Activated naive CD4-positive, alpha-beta T cell treated with anti-CD3 and anti-CD28 coated beads for 36 hours (primary cell): ENCODE measurements at regions of chr3 and their contacts with region 1.

Region 1: GRCh38 chr3:169744366-169745054 is 20.4 kb downstream of the TERC start:
- DNase-seq: no peak
- H3K4me3 Mint-ChIP-seq: no peak overlapping the region
- H3K27ac Mint-ChIP-seq: no peak overlapping the region
- H3K4me1 Mint-ChIP-seq: peaks cover 14% of the 10 kb centered on the region
- H3K27me3 Mint-ChIP-seq: peaks cover 16% of the 10 kb centered on the region

Region 2: DNA sequence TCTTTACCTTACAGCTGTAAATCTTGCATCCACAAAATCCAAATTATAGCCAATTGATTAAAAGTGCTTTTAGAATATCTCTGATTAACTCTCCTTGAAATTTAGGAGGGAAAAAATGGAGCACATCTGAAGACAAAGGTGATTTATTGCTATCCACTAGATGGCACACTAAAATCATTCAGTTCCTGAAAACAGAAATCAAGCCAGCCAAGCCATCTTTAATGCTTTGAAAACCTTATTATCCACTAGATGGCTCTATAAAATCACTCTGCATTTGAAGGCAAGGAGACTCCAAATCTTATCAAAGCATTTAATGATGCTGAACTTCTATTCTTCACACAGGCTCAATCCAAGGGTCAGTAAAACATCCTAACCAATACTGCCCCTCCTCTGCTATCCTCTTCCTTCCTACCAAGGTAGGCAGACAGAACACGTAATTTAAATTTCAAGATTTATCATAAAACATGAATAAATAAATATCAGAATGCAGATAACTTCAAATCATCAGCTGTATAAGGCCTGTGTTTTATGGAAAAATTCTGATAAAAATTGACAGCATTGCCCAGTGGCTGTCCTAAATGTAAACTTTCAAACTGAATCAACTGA is 1697.2 kb before region 1 on chr3:
- CTCF ChIA-PET with region 1: no interaction called
- intact Hi-C with region 1: loop called (anchors 5 kb)
- DNase-seq: no peak
- H3K4me3 Mint-ChIP-seq: no peak overlapping the region
- H3K27ac Mint-ChIP-seq: no peak overlapping the region
- H3K4me1 Mint-ChIP-seq: no peaks in the 10 kb centered on the region
- H3K27me3 Mint-ChIP-seq: peaks cover 9% of the 10 kb centered on the region

Region 3: GRCh38 chr3:168865022-168865551 is 879.4 kb before region 1 on chr3:
- CTCF ChIA-PET with region 1: interaction called, 5 read pairs
- intact Hi-C with region 1: loop called (anchors 1 kb)
- DNase-seq: no peak
- H3K4me3 Mint-ChIP-seq: no peak overlapping the region
- H3K27ac Mint-ChIP-seq: no peak overlapping the region
- H3K4me1 Mint-ChIP-seq: no peaks in the 10 kb centered on the region
- H3K27me3 Mint-ChIP-seq: no peaks in the 10 kb centered on the region

Region 4: DNA sequence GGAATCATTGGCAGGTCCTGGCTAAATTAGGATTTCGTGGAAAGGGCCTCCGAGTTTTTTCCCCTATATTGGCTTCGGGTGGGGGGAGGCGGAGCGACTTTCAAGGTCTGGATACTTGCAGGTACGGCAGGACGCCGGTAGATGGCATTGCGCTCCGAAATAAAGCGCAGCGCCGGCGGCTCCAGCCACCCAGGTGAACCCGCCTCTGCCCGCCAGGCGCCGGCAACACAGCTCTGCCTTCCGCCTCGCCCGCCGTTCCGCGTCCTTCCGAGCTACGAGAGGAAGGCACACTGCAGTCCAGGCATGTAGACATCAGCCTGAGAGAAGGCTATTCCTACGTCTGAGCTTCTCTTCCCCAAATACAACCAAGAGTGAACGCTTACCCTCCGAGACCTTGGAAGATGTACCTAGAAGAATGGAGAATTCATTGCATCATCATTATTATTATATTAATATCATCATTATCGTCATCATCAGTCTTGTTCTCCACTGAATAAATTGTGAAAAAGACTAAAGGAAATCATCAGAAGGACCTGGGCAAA is 595.1 kb before region 1 on chr3:
- CTCF ChIA-PET with region 1: interaction called, 8 read pairs
- intact Hi-C with region 1: loop called (anchors 1 kb)
- DNase-seq: peak; percentile 82
- H3K4me3 Mint-ChIP-seq: peak overlapping the region; percentile 65
- H3K27ac Mint-ChIP-seq: no peak overlapping the region
- H3K4me1 Mint-ChIP-seq: peaks cover 20% of the 10 kb centered on the region
- H3K27me3 Mint-ChIP-seq: peaks cover 63% of the 10 kb centered on the region

Region 5: DNA sequence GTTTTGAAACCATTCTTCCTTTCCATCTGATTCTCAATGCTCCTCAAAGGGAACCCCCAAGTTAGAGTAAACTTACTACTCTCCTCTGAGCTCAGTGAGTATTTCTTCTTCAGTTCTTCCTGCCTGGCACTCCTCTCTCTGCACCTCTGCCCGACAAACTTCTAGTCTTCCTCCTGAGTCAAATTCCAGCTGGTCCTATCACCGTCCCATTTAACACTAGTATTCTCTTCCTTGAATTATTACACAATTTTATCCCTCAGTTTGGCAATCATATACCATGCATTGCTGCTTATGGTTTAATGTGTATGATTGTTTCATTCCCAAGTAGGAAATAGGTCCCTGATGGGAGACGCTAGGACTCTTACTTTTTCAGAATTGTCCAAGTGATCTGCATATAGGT is 360.7 kb before region 1 on chr3:
- CTCF ChIA-PET with region 1: no interaction called
- intact Hi-C with region 1: no loop called
- DNase-seq: no peak
- H3K4me3 Mint-ChIP-seq: no peak overlapping the region
- H3K27ac Mint-ChIP-seq: peak overlapping the region; percentile 15
- H3K4me1 Mint-ChIP-seq: no peaks in the 10 kb centered on the region
- H3K27me3 Mint-ChIP-seq: peaks cover 12% of the 10 kb centered on the region

Region 6: GRCh38 chr3:169564883-169565282 is 179.6 kb before region 1 on chr3:
- CTCF ChIA-PET with region 1: no interaction called
- intact Hi-C with region 1: loop called (anchors 5 kb)
- DNase-seq: no peak
- H3K4me3 Mint-ChIP-seq: no peak overlapping the region
- H3K27ac Mint-ChIP-seq: no peak overlapping the region
- H3K4me1 Mint-ChIP-seq: no peaks in the 10 kb centered on the region
- H3K27me3 Mint-ChIP-seq: peaks cover 8% of the 10 kb centered on the region

Region 7: GRCh38 chr3:169772897-169773828 is 28.7 kb after region 1 on chr3 and contains the start of gene MYNN:
- CTCF ChIA-PET with region 1: no interaction called
- intact Hi-C with region 1: loop called (anchors 1 kb)
- DNase-seq: peak; percentile 94
- H3K4me3 Mint-ChIP-seq: peak within 1 kb of the TSS; percentile 94
- H3K27ac Mint-ChIP-seq: peak within 1 kb of the TSS; percentile 97
- H3K4me1 Mint-ChIP-seq: peaks cover 36% of the 10 kb centered on the region
- H3K27me3 Mint-ChIP-seq: no peaks in the 10 kb centered on the region
- total RNA-seq, gene MYNN: 12.0 to 13.5 TPM